BJ (cell line): ENCODE measurements at regions of chr12 and their contacts with region 1.

Region 1: DNA sequence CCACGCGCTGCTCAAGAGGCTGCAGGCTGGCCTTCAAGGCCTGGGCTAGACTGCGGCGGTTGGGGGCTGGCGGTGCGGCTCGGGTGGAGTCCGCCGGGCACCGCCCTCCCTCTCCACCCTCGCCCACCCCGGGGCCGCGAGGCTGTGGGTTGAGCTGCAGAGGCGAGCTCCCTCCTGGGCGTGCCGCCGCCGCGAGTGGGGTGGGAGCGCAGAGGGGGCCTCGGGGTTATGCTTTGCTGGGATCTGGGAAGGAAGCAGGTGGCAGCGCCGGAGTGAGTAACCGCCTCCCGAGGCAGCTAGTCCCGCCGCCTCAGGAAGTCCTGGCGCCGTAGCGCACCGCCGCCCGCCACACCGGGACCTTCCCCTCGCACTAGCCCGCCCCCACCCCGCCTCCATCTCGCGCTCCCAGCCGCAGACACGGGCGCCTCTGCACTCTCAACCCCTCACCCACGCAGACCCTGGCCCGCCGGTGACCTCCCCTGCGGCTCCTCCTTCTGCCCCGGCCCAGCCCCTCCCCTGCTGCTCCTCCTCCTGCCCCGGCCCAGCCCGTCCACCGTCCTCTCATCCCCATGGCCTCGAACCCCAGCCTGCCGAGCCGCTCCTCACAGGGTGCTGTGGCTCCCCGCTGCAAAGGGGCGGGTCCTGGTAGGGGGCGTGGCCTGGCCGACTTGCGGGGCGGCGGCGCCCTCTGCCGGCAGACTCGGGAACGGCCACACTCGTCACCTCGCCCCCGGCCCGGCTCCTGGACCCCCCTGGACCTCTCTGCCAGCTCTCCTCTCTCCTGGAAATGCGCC is 16.6 kb downstream of the TAMALIN start:
- DNase-seq: no peak
- H3K4me3 ChIP-seq: peak overlapping the region; percentile 61
- H3K27me3 ChIP-seq: no peaks in the 10 kb centered on the region; the same call in 1 of the 2 replicates
- CTCF ChIP-seq: peak; percentile 91

Region 2: GRCh38 chr12:50734409-50735263 is 1288.7 kb before region 1 on chr12:
- CTCF ChIA-PET with region 1: no interaction called
- POLR2A ChIA-PET with region 1: no interaction called
- DNase-seq: no peak
- H3K4me3 ChIP-seq: no peak overlapping the region
- H3K27me3 ChIP-seq: no peaks in the 10 kb centered on the region
- CTCF ChIP-seq: peak; percentile 75

Region 3: GRCh38 chr12:51905471-51906429 is 117.6 kb before region 1 on chr12:
- CTCF ChIA-PET with region 1: interaction called, 10 read pairs
- POLR2A ChIA-PET with region 1: no interaction called
- DNase-seq: no peak
- H3K4me3 ChIP-seq: no peak overlapping the region
- H3K27me3 ChIP-seq: no peaks in the 10 kb centered on the region
- CTCF ChIP-seq: no peak

Region 4: GRCh38 chr12:52004042-52004648 is 19.2 kb before region 1 on chr12:
- CTCF ChIA-PET with region 1: interaction called, 674 read pairs
- POLR2A ChIA-PET with region 1: interaction called, 3 read pairs
- DNase-seq: no peak
- H3K4me3 ChIP-seq: no peak overlapping the region
- H3K27me3 ChIP-seq: peaks cover 6% of the 10 kb centered on the region; the same call in 1 of the 2 replicates
- CTCF ChIP-seq: peak; percentile 85

Region 5: GRCh38 chr12:52050761-52051541 is 27.6 kb after region 1 on chr12 and contains the start of gene NR4A1:
- CTCF ChIA-PET with region 1: interaction called, 48 read pairs
- POLR2A ChIA-PET with region 1: no interaction called
- DNase-seq: peak; percentile 60
- H3K4me3 ChIP-seq: peak within 1 kb of the TSS; percentile 63
- H3K27me3 ChIP-seq: no peaks in the 10 kb centered on the region
- CTCF ChIP-seq: peak; percentile 25; the same call in 1 of the 2 replicates
- polyA plus RNA-seq, gene NR4A1: 9.8 and 18.6 TPM in 2 replicates

Region 6: GRCh38 chr12:52069327-52070184 is 46.2 kb after region 1 on chr12 and contains the start of gene ATG101:
- CTCF ChIA-PET with region 1: interaction called, 974 read pairs
- POLR2A ChIA-PET with region 1: no interaction called
- DNase-seq: peak; percentile 45
- H3K4me3 ChIP-seq: peak within 1 kb of the TSS; percentile 58
- H3K27me3 ChIP-seq: no peaks in the 10 kb centered on the region
- CTCF ChIP-seq: peak; percentile 91
- polyA plus RNA-seq, gene ATG101: 115 and 163 TPM in 2 replicates

Region 7: GRCh38 chr12:52358575-52359350 is 335.4 kb after region 1 on chr12:
- CTCF ChIA-PET with region 1: no interaction called
- POLR2A ChIA-PET with region 1: no interaction called
- DNase-seq: no peak
- H3K4me3 ChIP-seq: no peak overlapping the region
- H3K27me3 ChIP-seq: peaks cover 4% of the 10 kb centered on the region; the same call in 1 of the 2 replicates
- CTCF ChIP-seq: no peak

Region 8: GRCh38 chr12:52879394-52880351 is 856.3 kb after region 1 on chr12:
- CTCF ChIA-PET with region 1: interaction called, 11 read pairs
- POLR2A ChIA-PET with region 1: no interaction called
- DNase-seq: no peak
- H3K4me3 ChIP-seq: no peak overlapping the region
- H3K27me3 ChIP-seq: no peaks in the 10 kb centered on the region
- CTCF ChIP-seq: peak; percentile 93